OCI-LY7 (cell line): ENCODE measurements at regions of chr4 and their contacts with region 1.

Region 1: DNA sequence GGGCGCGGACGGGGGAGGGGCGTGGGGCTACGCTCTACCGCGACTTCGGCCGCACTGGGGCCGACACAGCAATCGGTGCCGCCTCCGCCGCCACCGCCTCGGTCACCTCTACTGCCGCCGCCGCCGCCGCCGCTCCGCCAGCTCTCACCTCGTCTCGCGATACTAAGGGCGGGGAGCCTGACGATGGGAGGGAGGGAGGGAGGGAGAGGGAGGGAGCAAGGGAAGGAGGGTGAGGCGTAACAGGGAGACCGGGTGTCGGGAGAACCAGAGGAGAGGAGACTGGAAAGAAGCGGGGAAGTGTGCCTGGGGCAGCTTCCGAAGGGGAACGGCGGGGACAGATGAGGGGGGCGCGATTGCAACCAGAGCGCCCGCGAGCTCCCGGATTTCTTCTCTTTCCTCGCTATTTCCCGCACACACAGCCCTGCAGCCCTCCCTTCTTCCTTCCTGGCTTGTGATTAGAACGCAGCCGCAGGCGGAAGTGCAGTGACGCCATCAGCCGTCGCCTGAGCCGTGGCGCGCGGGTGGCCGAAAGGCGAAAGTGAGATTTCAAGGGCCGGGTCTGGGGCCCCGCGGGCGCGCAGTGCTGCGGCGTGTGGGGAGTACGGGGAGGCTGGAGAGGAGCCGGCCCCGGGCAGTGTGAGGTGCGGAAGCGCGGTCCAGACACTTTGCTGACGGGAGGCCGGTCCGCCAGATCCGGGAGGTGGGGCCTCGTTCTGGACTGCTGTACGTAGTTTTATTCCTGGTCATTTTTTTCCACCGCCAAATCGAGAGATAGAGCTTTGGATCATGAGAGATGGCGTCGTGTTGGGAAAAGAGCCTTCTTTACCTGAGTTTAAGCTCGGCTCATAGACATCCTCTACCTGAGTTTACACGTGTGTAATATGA is at the start of gene ANKRD17:
- DNase-seq: peak; percentile 94
- H3K4me3 ChIP-seq: peak within 1 kb of the TSS; percentile 99
- H3K27ac ChIP-seq: peak within 1 kb of the TSS; percentile 84
- H3K4me1 ChIP-seq: peaks cover 50% of the 10 kb centered on the region
- CTCF ChIP-seq: no peak
- total RNA-seq, gene ANKRD17: 39.4 and 53.0 TPM in 2 replicates

Region 2: DNA sequence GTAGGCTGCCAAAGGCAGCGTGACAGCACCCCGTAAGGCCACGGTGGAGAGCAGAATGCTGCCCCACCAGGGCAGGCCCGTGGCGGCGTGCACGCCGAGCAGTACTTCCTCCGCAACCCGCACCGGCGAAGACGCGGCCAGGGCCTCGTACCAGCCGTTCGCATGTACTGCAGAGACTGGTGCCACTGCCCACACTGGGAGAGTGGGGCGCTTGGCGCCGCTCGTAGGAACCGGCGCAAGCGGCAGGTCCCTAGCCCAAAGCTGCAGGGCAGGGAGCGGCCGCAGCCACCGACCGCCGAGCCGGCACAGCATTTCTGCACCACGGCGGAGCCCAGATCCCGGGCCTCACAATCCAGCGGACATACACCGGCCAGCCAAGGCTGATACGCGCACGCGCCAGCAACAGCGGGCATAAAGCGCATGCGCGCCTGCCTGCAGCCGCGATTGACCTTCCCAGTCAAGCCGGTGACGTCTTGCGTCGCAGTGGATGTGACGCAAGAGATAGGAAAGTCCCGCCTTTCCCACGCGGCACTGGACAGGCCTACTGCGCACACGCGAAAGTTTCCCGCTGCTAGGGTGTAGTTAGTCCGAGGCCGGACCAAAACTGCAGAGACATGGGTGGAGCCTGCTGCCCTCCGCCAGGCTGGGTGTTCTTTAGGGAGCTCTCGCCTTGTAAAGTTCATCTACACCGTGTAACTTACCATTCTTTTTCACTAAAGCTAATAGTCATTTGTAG is 189.4 kb before region 1 on chr4 and contains the start of gene COX18:
- CTCF ChIA-PET with region 1: interaction called, 3 read pairs
- POLR2A ChIA-PET with region 1: interaction called, 20 read pairs
- intact Hi-C with region 1: loop called (anchors 1 kb)
- DNase-seq: peak; percentile 99
- H3K4me3 ChIP-seq: peak within 1 kb of the TSS; percentile 81
- H3K27ac ChIP-seq: peak within 1 kb of the TSS; percentile 93
- H3K4me1 ChIP-seq: peaks cover 15% of the 10 kb centered on the region
- CTCF ChIP-seq: 0 out of 2 replicates have a peak, but pooled peaks have one; percentile 22
- total RNA-seq, gene COX18: 14.3 and 16.9 TPM in 2 replicates

Region 3: DNA sequence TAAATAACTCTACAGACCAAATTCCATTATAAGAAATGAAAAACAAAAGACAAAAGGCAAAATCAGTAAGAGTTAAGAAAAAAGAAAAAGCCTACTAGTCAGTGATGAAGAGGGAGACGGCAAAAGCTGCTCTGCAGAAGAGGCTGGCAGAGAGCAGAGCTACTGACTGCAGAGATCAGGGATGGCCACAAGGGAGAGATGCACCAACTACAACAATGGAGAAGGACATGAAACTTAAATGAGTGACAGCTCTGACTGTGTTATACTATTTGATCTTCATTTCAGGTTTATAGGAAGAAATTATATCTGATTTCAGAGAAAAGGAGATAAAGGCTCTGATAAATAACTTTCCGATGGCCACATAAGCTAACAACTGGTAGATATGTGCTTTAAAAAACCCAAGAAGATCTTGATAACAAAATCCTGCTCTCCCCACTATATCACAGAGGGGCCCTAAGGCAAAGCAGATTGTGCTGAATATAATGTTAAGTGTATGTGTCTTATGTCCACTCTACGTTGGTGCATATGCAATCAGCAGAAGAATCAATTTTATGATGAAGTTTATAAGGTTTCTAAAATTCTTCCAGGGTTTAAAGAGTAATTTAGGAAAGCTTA is 131.0 kb before region 1 on chr4:
- CTCF ChIA-PET with region 1: no interaction called
- POLR2A ChIA-PET with region 1: interaction called, 3 read pairs
- intact Hi-C with region 1: loop called (anchors 10 kb)
- DNase-seq: peak; percentile 28
- H3K4me3 ChIP-seq: no peak overlapping the region
- H3K27ac ChIP-seq: no peak overlapping the region
- H3K4me1 ChIP-seq: no peaks in the 10 kb centered on the region
- CTCF ChIP-seq: peak; percentile 50; the same call in 1 of the 2 replicates

Region 4: GRCh38 chr4:73275318-73275654 is 16.4 kb after region 1 on chr4:
- CTCF ChIA-PET with region 1: no interaction called
- POLR2A ChIA-PET with region 1: interaction called, 12 read pairs
- intact Hi-C with region 1: no loop called
- DNase-seq: no peak
- H3K4me3 ChIP-seq: no peak overlapping the region
- H3K27ac ChIP-seq: no peak overlapping the region
- H3K4me1 ChIP-seq: no peaks in the 10 kb centered on the region
- CTCF ChIP-seq: no peak

Region 5: DNA sequence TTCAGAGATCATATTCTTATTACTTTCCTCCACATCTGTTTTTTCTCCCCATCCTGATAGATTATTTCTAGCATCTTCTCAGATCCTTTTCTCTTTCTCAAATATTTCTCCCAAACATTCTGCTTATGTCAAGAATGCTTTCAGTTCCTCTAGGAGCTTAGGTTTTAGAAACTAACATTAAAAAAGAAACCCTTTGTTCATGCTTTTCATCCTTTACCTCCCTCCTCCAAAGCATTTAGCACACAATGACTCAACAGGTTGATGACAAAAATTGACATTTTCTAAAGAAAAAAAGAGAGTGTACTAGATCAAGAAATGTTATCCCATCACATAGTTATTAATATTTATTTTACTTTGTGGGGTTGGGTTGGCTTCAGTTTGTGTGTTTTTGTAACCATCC is 128.6 kb after region 1 on chr4:
- CTCF ChIA-PET with region 1: no interaction called
- POLR2A ChIA-PET with region 1: no interaction called
- intact Hi-C with region 1: no loop called
- DNase-seq: no peak
- H3K4me3 ChIP-seq: no peak overlapping the region
- H3K27ac ChIP-seq: no peak overlapping the region
- H3K4me1 ChIP-seq: no peaks in the 10 kb centered on the region
- CTCF ChIP-seq: no peak